GM10248 (cell line): ENCODE measurements at regions of chr11 and their contacts with region 1.

Region 1: GRCh38 chr11:102007567-102008437 is 39.4 kb upstream of the CFAP300 start:
- DNase-seq: peak; percentile 32
- CTCF ChIP-seq: peak; percentile 44

Region 2: DNA sequence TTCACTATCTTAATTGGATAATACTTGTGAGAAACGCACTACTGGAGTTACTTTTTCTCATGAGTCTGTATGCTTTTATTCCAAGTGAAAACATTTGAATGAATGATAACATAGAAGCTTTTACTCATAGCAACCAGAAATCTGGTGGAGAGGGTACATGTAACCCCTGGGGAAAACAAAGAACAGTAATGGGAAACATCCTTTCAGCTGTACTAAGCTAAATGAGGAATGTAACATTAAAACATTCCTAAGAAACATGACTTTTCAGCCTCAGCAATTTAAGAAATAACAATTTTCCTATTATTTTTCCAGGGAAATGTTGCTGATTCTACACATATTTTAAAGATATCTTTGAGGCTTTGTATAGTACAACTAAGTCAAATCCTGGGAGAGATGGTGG is 190.2 kb before region 1 on chr11:
- CTCF ChIA-PET with region 1: no interaction called
- POLR2A ChIA-PET with region 1: no interaction called
- DNase-seq: no peak
- CTCF ChIP-seq: no peak

Region 3: DNA sequence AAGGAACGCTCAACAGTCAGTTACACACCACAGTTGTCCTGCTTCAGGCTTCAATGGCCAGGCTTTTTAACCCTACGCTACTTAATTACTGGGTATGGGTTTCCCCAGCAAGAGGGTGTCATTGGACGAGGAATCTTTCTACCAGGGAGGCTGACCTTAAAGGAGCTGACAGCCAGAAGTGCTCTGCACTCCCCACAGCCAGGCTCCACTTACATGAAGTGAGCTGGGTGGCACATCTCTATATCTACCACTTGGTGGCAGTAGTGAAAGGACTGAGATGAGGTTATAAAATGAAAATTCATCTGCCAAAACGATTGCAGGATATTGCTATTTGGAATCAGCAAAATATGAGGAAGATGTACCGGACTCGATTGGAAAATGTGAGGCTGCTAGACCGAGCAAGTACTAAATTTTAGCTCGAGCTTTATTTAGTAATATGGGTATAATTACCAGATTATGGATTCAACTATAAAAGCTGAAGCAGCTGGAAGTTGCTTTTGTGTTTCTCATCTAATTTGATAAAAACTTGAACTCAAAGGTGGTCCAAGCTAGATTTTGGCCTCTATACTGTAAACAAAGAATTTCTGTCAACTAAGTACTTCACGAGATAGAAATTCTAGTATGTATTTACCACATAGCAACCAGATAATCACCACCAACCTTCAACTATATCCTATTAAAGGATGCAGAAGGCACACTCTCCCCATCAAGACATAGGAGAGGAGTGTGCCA is 146.9 kb before region 1 on chr11:
- CTCF ChIA-PET with region 1: interaction called, 61 read pairs
- POLR2A ChIA-PET with region 1: no interaction called
- DNase-seq: peak; percentile 28
- CTCF ChIP-seq: peak; percentile 71

Region 4: GRCh38 chr11:101996111-101996510 is 11.7 kb before region 1 on chr11:
- CTCF ChIA-PET with region 1: interaction called, 45 read pairs
- POLR2A ChIA-PET with region 1: no interaction called
- DNase-seq: no peak
- CTCF ChIP-seq: no peak

Region 5: GRCh38 chr11:102026212-102026611 is 18.4 kb after region 1 on chr11:
- CTCF ChIA-PET with region 1: interaction called, 24 read pairs
- POLR2A ChIA-PET with region 1: no interaction called
- DNase-seq: no peak
- CTCF ChIP-seq: no peak